Activated CD8-positive, alpha-beta T cell treated with anti-CD3 and anti-CD28 coated beads for 36 hours (primary cell): ENCODE measurements at regions of chr7 and their contacts with region 1.

Region 1: DNA sequence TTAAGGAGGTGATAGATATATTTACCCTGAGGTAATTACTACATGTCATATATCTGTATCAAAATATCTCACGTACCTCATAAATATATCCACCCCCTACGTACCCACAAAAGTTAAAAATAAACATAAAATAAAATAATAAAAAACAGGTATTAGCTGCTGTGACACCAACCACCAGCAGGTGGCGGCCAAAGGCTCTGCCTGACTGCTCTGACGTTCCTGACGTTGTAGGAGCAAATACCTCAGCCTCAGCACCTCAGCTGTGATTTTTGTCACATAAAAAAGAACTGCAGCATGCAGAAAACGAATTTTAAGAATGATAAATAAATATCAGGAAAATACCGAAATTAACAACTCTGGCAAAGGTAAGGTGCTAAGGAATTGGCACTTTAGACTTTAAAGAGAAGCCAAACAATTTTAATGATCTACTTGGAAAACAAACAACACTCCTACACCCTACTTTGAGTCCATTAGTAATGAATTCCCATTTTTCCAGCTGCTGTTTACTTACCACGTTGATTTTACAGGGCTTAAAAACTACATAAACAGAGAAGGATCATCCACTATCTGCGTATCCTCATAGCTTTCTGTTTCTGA is 125.4 kb upstream of the TARP start:
- DNase-seq: peak; percentile 70
- ATAC-seq: peak; percentile 49
- H3K4me3 Mint-ChIP-seq: no peak overlapping the region
- H3K27ac Mint-ChIP-seq: no peak overlapping the region
- H3K4me1 Mint-ChIP-seq: peaks cover 2% of the 10 kb centered on the region
- H3K27me3 Mint-ChIP-seq: peaks cover 5% of the 10 kb centered on the region
- CTCF ChIP-seq: peak; percentile 98

Region 2: DNA sequence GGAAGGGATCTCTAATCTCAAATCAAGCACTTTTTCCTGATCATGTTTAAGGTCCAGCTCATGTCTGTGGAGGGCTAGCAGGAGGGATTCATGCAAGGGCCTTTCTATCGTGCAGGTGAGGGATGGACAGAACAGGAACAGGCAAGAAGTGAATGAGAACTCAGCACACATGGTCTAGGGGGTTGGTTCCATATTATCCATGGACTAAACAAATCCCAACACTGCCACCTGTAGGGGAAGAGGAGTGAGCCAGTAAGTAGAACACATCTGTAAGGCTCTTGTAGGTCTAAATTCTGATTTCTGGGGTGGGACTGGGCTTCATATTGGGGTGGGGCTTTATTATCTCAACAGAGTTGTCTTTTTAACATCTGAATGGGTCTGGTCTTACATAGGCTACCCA is 12.6 kb after region 1 on chr7:
- CTCF ChIA-PET with region 1: interaction called, 37 read pairs
- POLR2A ChIA-PET with region 1: no interaction called
- intact Hi-C with region 1: no loop called
- DNase-seq: peak; percentile 17
- ATAC-seq: peak; percentile 49
- H3K4me3 Mint-ChIP-seq: no peak overlapping the region
- H3K27ac Mint-ChIP-seq: no peak overlapping the region
- H3K4me1 Mint-ChIP-seq: peaks cover 19% of the 10 kb centered on the region
- H3K27me3 Mint-ChIP-seq: no peaks in the 10 kb centered on the region
- CTCF ChIP-seq: no peak

Region 3: DNA sequence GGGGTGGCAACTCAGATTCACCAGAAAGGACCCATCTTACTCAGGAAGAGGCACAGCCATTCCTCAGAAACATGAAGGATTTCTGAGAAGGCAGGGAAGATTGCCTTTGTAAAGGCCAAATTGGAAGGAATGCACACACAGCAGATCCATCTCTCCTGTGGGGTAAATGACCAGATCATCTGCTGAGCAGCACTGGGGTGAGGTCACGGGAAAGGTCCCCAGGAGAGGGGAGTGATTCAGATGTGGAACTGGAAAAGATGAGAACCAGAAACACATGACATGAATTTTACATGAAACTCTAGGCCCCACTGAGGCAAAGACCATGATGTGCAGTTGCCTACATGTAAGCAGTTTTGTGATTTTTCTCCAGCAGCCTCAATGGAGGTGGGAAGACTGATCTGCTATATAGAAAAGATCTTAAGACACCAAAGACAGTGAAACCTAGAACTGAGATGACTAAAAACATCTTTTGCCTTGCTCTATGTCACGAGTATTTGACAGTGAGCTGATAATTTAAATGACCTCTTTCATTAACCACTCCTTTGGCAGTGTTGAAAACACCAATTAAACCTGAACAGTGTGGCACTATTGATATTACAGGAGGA is 140.8 kb after region 1 on chr7:
- CTCF ChIA-PET with region 1: interaction called, 10 read pairs
- POLR2A ChIA-PET with region 1: no interaction called
- intact Hi-C with region 1: no loop called
- DNase-seq: no peak
- ATAC-seq: no peak
- H3K4me3 Mint-ChIP-seq: no peak overlapping the region
- H3K27ac Mint-ChIP-seq: no peak overlapping the region
- H3K4me1 Mint-ChIP-seq: peaks cover 9% of the 10 kb centered on the region
- H3K27me3 Mint-ChIP-seq: peaks cover 5% of the 10 kb centered on the region
- CTCF ChIP-seq: no peak

Region 4: DNA sequence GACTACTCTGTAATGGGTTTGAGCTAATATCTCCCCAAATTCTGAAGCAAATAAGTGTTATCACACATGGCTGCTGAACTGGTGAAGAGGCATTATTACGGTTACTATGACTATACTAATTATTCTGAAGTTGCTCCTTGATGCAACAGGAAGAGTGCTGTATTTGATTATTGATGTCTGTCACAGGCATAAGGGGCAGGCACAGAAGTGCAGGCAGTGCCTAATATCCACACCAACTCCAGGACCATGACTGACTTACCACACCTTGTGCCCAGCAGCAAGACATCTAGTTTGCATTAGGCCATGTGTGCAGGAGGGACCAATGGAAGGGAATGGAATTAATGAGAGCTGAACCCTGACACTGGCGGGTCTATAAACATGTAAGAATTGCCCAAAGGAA is 169.7 kb after region 1 on chr7:
- CTCF ChIA-PET with region 1: interaction called, 13 read pairs
- POLR2A ChIA-PET with region 1: no interaction called
- intact Hi-C with region 1: no loop called
- DNase-seq: no peak
- ATAC-seq: no peak
- H3K4me3 Mint-ChIP-seq: no peak overlapping the region
- H3K27ac Mint-ChIP-seq: no peak overlapping the region
- H3K4me1 Mint-ChIP-seq: no peaks in the 10 kb centered on the region
- H3K27me3 Mint-ChIP-seq: peaks cover 7% of the 10 kb centered on the region
- CTCF ChIP-seq: no peak

Region 5: DNA sequence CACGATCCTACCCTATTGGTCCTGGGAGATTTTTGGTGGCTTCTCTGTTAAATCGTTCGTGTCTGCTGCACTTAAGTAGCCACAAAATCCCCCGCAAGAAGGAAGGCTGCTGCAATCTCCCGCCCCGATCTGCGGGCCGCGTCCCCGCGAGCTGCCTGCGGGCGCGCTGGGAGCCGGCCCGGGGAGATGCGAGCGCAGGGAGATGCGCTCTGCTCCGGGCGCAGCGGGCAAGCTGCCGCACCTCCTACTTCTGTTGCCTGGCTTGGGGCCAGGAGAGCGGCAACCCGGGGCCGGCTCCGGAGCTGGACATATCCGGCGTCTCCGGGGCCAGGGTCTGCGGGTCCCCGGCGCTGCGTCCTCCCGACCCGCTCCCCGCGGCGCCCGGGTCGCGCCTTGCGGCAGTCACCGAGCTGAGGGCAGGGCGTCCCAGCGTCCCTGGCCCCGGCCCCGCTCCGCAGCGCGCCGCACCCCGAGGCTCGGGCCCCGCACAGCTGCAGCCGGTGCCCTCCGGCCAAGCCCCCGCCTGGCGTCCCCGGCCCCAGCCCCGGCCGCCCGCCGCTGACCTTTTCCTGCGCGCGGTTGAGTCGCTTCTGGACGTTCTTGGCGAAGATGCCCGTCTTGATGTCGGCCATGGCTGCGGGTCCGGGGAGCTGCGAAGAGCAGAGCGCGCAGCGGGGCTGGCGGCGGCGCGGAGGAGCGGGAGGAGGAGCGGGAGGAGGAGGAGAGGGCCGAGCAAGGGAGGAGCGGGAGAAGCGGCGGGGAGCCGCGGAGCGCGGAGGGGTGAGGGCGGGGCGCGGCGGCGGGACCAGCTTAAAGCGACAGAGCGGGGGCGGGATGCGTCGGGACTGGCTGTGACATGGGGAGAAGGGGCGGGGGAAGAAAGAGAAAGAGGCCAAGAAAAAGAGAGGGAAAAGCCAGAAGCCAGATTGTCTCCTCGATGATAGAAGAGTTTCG is 232.2 kb after region 1 on chr7 and contains the start of gene AMPH:
- CTCF ChIA-PET with region 1: interaction called, 22 read pairs
- POLR2A ChIA-PET with region 1: no interaction called
- intact Hi-C with region 1: no loop called
- DNase-seq: peak; percentile 28
- ATAC-seq: peak; percentile 42
- H3K4me3 Mint-ChIP-seq: peak within 1 kb of the TSS; percentile 56
- H3K27ac Mint-ChIP-seq: no peak within 1 kb of the TSS
- H3K4me1 Mint-ChIP-seq: peaks cover 6% of the 10 kb centered on the region
- H3K27me3 Mint-ChIP-seq: peaks cover 44% of the 10 kb centered on the region
- CTCF ChIP-seq: no peak
- total RNA-seq, gene AMPH: not detected

Region 6: GRCh38 chr7:38660427-38661099 is 261.7 kb after region 1 on chr7:
- CTCF ChIA-PET with region 1: interaction called, 38 read pairs
- POLR2A ChIA-PET with region 1: no interaction called
- intact Hi-C with region 1: loop called (anchors 2 kb)
- DNase-seq: peak; percentile 40
- ATAC-seq: peak; percentile 74
- H3K4me3 Mint-ChIP-seq: no peak overlapping the region
- H3K27ac Mint-ChIP-seq: no peak overlapping the region
- H3K4me1 Mint-ChIP-seq: no peaks in the 10 kb centered on the region
- H3K27me3 Mint-ChIP-seq: peaks cover 15% of the 10 kb centered on the region
- CTCF ChIP-seq: peak; percentile 80